Activated CD4-positive, alpha-beta memory T cell treated with anti-CD3 and anti-CD28 coated beads, Interleukin-2, amount 10 ng/mL, durations not matched to agents 7 days and 5 days (primary cell): ENCODE measurements at regions of chr3 and their contacts with region 1.

Region 1: GRCh38 chr3:131033480-131034080 is 6.9 kb downstream of the NEK11 start:
- DNase-seq: no peak
- H3K4me3 Mint-ChIP-seq: no peak overlapping the region
- H3K27ac Mint-ChIP-seq: no peak overlapping the region
- H3K4me1 Mint-ChIP-seq: peaks cover 3% of the 10 kb centered on the region
- H3K27me3 Mint-ChIP-seq: no peaks in the 10 kb centered on the region

Region 2: DNA sequence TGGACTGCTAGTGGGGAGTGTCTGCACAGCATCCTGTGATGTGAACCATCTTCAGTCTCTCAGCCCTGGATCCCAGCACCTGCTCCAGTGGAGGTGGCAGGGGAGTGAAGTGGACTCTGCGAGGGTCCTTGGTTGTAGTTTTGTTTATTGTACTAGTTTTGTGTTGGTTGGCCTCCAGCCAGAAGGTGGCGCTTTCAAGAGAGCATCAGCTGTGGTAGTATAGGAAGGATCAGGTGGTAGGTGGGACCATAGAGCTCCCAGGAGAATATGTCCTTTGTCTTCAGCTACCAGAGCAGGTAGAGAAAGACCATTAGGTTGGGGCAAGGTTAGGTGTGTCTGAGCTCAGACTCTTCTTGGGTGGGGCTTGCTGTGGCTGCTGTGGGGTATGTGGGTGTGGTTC is 14.0 kb after region 1 on chr3:
- CTCF ChIA-PET with region 1: interaction called, 13 read pairs
- POLR2A ChIA-PET with region 1: interaction called, 55 read pairs
- DNase-seq: no peak
- H3K4me3 Mint-ChIP-seq: no peak overlapping the region
- H3K27ac Mint-ChIP-seq: no peak overlapping the region
- H3K4me1 Mint-ChIP-seq: peaks cover 18% of the 10 kb centered on the region
- H3K27me3 Mint-ChIP-seq: peaks cover 15% of the 10 kb centered on the region

Region 3: DNA sequence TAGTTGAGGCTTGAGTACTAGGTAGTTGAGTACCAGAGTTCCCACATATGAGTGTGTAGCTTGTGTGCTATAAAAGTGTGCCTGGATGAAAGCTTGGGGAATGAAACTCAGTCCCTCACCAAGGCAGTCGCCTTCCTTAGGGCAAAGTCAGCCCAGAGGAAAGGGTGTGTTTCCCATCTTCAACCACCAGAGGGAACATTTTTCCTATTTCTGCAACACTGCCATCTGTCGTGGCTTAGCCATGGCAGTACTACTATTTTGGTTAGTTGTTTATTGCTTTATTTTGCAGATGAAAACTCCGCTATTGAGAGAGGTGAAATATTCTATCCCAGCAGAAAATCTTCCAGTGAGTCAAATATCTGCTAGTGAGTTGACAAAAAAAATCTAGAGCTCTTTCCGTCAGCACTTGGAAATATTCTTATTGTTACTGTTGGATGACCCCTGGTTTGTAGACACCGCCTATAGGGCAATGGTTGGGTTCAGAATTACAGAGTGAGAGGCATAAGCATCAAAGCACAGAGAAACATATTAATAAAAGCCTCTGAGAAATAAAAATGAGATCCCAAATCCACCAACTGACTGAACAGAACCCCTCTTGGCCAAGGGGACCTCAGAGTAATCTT is 761.3 kb after region 1 on chr3:
- CTCF ChIA-PET with region 1: interaction called, 13 read pairs
- POLR2A ChIA-PET with region 1: no interaction called
- DNase-seq: no peak
- H3K4me3 Mint-ChIP-seq: no peak overlapping the region
- H3K27ac Mint-ChIP-seq: no peak overlapping the region
- H3K4me1 Mint-ChIP-seq: peaks cover 11% of the 10 kb centered on the region
- H3K27me3 Mint-ChIP-seq: peaks cover 7% of the 10 kb centered on the region